WTC11 (cell line): ENCODE measurements at regions of chr17 and their contacts with region 1.

Region 1: GRCh38 chr17:28726226-28727130 is at the start of gene TLCD1:
- DNase-seq: peak; percentile 99
- ATAC-seq: peak; percentile 29
- H3K4me3 Mint-ChIP-seq: peak within 1 kb of the TSS; percentile 93
- H3K27ac Mint-ChIP-seq: peak within 1 kb of the TSS; percentile 99
- H3K4me1 Mint-ChIP-seq: peaks cover 44% of the 10 kb centered on the region
- H3K27me3 Mint-ChIP-seq: no peaks in the 10 kb centered on the region
- CTCF ChIP-seq: peak; percentile 96
- total RNA-seq, gene TLCD1: 36.0 to 41.2 TPM (median 36.5 TPM) in 3 replicates

Region 2: DNA sequence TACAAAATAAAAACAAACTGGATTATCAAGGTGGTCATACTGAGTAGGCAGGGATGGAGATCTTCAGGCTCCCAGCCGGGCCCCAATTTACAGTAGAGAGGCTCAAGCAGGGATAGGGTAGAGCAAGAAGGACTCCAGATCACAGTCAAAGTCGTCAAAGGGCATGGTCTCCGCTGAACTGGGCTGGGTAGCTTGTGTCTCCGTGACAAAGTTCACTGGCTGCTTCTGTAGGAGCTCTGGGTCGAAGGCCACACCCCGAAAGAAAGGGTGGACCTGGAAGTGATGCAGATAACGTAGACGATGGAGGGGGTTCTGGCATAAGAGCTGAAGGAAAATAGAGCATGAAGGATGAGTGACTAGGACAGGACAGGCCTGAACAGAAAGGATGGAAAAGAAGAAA is 116.1 kb before region 1 on chr17:
- CTCF ChIA-PET with region 1: no interaction called
- POLR2A ChIA-PET with region 1: no interaction called
- DNase-seq: no peak
- ATAC-seq: no peak
- H3K4me3 Mint-ChIP-seq: no peak overlapping the region
- H3K27ac Mint-ChIP-seq: no peak overlapping the region
- H3K4me1 Mint-ChIP-seq: no peaks in the 10 kb centered on the region
- H3K27me3 Mint-ChIP-seq: no peaks in the 10 kb centered on the region
- CTCF ChIP-seq: no peak

Region 3: DNA sequence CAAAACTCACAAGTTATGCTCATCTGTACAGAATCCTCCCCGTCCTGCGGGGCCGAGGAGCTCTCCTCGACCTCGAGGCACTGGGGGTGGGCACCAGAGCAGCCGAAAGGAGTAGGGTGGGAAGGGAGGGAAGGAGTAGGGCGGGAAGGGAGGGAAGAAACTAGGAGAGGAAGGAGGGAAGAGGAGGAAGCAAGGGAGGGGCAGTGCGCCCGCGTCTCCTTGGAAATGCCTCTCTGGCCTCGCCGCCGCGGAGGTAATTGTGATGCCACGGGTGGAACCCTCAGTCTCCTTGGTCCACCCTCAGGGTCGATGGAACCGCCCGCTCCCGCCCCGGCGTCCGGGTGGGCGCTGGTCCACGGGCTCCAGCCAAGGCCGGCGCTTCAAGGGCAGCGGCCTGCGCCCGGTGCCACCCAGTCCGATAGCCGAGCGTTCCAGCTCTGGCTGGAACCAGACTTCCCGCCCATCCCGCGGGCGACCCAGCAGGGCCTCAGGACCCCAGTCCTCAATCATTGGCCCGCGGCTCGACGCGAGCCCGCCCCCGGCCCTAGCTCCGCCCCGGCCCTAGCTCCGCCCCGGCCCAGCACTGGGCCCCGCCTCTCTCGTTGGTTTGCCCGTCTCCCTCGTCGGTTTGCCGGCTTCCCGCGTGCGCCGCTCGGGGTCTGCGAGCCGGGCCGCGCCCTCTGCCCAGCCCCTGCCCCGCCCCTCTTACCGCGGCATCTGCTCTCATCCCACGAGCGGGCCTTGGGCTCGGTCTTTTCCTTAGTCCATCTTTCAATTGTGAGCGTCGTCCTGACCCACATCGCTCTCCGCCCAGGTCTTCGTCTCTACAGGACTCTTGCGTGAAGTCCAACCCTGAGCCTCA is 15.4 kb before region 1 on chr17:
- CTCF ChIA-PET with region 1: interaction called, 69 read pairs
- POLR2A ChIA-PET with region 1: interaction called, 72 read pairs
- DNase-seq: peak; percentile 98
- ATAC-seq: peak; percentile 88
- H3K4me3 Mint-ChIP-seq: peak overlapping the region; percentile 98
- H3K27ac Mint-ChIP-seq: peak overlapping the region; percentile 100
- H3K4me1 Mint-ChIP-seq: peaks cover 32% of the 10 kb centered on the region
- H3K27me3 Mint-ChIP-seq: no peaks in the 10 kb centered on the region
- CTCF ChIP-seq: no peak

Region 4: GRCh38 chr17:28763804-28764266 is 37.4 kb after region 1 on chr17:
- CTCF ChIA-PET with region 1: interaction called, 147 read pairs
- POLR2A ChIA-PET with region 1: interaction called, 13 read pairs
- DNase-seq: peak; percentile 81
- ATAC-seq: no peak
- H3K4me3 Mint-ChIP-seq: no peak overlapping the region
- H3K27ac Mint-ChIP-seq: peak overlapping the region; percentile 96
- H3K4me1 Mint-ChIP-seq: peaks cover 57% of the 10 kb centered on the region
- H3K27me3 Mint-ChIP-seq: no peaks in the 10 kb centered on the region
- CTCF ChIP-seq: peak; percentile 92

Region 5: DNA sequence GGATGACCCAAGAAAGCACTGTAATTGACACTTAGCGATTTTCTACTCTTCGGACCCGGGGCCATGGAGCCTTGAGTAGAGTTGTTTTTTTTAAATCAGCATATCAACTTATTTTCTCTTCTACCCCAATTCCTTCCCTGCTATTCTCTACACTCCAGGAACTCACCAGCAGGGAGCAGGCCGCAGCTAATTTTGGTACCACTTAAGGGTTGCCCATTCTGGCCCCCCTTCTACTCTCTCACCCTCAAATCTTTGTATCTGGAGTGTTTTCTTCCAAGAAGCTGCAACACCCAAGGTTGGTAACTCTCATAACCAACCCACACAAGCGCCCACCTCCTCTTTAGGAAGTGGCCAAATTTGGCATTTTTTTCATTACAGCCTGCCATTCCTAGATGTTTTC is 122.8 kb after region 1 on chr17:
- CTCF ChIA-PET with region 1: interaction called, 14 read pairs
- POLR2A ChIA-PET with region 1: no interaction called
- DNase-seq: no peak
- ATAC-seq: peak; percentile 60
- H3K4me3 Mint-ChIP-seq: no peak overlapping the region
- H3K27ac Mint-ChIP-seq: no peak overlapping the region; the same call in 1 of the 2 replicates
- H3K4me1 Mint-ChIP-seq: peaks cover 3% of the 10 kb centered on the region; the same call in 1 of the 2 replicates
- H3K27me3 Mint-ChIP-seq: no peaks in the 10 kb centered on the region
- CTCF ChIP-seq: no peak

Region 6: GRCh38 chr17:28878981-28879380 is 152.5 kb after region 1 on chr17:
- CTCF ChIA-PET with region 1: interaction called, 35 read pairs
- POLR2A ChIA-PET with region 1: interaction called, 10 read pairs
- DNase-seq: peak; percentile 80
- ATAC-seq: peak; percentile 98
- H3K4me3 Mint-ChIP-seq: no peak overlapping the region
- H3K27ac Mint-ChIP-seq: peak overlapping the region; percentile 18; the same call in 1 of the 2 replicates
- H3K4me1 Mint-ChIP-seq: peaks cover 6% of the 10 kb centered on the region; the same call in 1 of the 2 replicates
- H3K27me3 Mint-ChIP-seq: peaks cover 7% of the 10 kb centered on the region
- CTCF ChIP-seq: peak; percentile 31; the same call in 1 of the 2 replicates

Region 7: GRCh38 chr17:28902819-28903545 is 176.5 kb after region 1 on chr17 and contains the start of gene DHRS13:
- CTCF ChIA-PET with region 1: interaction called, 103 read pairs
- POLR2A ChIA-PET with region 1: interaction called, 21 read pairs
- DNase-seq: peak; percentile 95
- ATAC-seq: peak; percentile 89
- H3K4me3 Mint-ChIP-seq: peak within 1 kb of the TSS; percentile 85
- H3K27ac Mint-ChIP-seq: peak within 1 kb of the TSS; percentile 61
- H3K4me1 Mint-ChIP-seq: peaks cover 31% of the 10 kb centered on the region
- H3K27me3 Mint-ChIP-seq: no peaks in the 10 kb centered on the region
- CTCF ChIP-seq: peak; percentile 100
- total RNA-seq, gene DHRS13: 26.5 to 29.5 TPM (median 28.5 TPM) in 3 replicates

Region 8: DNA sequence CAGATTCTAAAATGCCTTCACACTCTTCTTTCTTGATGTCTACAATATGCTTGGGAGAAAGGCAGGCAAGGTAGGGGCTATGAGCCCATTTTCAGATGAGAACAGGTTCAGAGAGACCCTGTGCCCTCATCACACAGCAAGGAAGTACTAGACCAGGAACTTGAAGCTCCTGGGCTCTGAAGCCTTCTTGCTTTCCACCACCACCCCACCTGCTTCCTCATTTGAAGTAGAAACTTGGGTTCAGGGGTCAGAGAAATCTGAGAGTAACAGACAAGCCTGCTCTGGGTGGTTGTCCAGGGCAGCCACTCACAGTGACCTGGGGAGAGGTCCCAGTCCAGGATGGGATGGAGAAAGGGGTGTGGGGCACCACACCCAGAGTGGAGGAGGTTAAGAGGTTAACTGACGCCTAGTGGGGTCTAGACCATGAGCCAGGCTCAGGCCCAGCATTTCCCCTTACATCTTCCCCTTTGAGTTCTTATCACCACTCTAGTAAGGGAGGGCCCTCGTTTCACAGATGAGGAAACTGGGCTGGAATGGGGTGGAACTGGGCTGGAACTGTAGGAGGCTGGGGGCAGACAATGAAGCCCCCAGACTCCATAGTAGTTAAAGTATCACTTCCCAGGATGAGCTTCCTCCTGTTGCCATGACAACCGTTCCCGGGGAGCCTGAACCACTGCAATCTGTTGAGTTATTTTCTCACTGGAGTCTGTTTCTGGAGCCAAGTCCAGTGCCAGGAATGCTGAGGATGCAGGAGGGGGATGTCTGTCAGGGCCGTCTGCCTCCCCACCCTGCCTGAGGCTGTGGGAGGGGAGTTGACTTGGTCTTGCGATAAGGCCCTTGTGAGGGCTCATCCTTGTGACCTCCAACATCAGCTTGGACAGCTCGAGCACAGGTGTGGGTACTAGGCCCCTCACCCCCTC is 241.0 kb after region 1 on chr17:
- CTCF ChIA-PET with region 1: interaction called, 11 read pairs
- POLR2A ChIA-PET with region 1: no interaction called
- DNase-seq: no peak
- ATAC-seq: no peak
- H3K4me3 Mint-ChIP-seq: no peak overlapping the region
- H3K27ac Mint-ChIP-seq: 0 out of 2 replicates have a peak overlapping the region, but pooled peaks have one; percentile 14
- H3K4me1 Mint-ChIP-seq: peaks cover 43% of the 10 kb centered on the region
- H3K27me3 Mint-ChIP-seq: no peaks in the 10 kb centered on the region; the same call in 1 of the 2 replicates
- CTCF ChIP-seq: no peak